Caco-2 (cell line): ENCODE measurements at regions of chr2 and their contacts with region 1.

Region 1: GRCh38 chr2:190136259-190136658 is 73.7 kb upstream of the MSTN start:
- DNase-seq: peak; percentile 61 to 77
- H3K4me3 ChIP-seq: no peak overlapping the region
- H3K4me3 Mint-ChIP-seq: no peak overlapping the region
- H3K27ac Mint-ChIP-seq: no peak overlapping the region
- H3K4me1 ChIP-seq: peaks cover 18% of the 10 kb centered on the region
- H3K4me1 Mint-ChIP-seq: peaks cover 7% of the 10 kb centered on the region
- H3K27me3 ChIP-seq: no peaks in the 10 kb centered on the region
- H3K27me3 Mint-ChIP-seq: no peaks in the 10 kb centered on the region
- CTCF ChIP-seq: no peak

Region 2: DNA sequence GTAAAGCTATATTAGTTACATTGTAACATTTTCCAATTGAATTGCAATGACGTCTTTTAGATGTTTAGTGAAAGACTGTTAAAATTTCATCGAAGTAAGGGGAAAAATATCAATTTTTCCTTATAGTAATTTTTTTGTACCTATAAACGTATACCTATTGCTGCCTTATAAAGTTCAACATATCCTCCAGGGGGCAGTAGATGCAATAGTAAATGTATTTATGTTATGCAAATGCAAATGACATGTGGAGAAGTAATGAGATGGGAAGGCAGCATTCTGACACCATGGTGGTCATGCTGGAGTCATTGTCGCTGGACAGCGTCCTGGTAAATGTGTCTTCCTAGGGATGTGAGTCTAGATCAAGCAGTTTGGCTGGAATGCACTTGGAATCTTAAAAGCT is 112.4 kb before region 1 on chr2:
- CTCF ChIA-PET with region 1: no interaction called
- POLR2A ChIA-PET with region 1: no interaction called
- intact Hi-C with region 1: no loop called
- DNase-seq: peak in 1 of 2 experiments; percentile 66
- H3K4me3 ChIP-seq: no peak overlapping the region
- H3K4me3 Mint-ChIP-seq: no peak overlapping the region
- H3K27ac Mint-ChIP-seq: no peak overlapping the region
- H3K4me1 ChIP-seq: no peaks in the 10 kb centered on the region
- H3K4me1 Mint-ChIP-seq: no peaks in the 10 kb centered on the region
- H3K27me3 ChIP-seq: no peaks in the 10 kb centered on the region; the same call in 1 of the 2 replicates
- H3K27me3 Mint-ChIP-seq: peaks cover 11% of the 10 kb centered on the region
- CTCF ChIP-seq: peak; percentile 51 to 54

Region 3: GRCh38 chr2:190170673-190171072 is 34.4 kb after region 1 on chr2:
- CTCF ChIA-PET with region 1: no interaction called
- POLR2A ChIA-PET with region 1: no interaction called
- intact Hi-C with region 1: loop called (anchors 1 kb)
- DNase-seq: no peak
- H3K4me3 ChIP-seq: no peak overlapping the region
- H3K4me3 Mint-ChIP-seq: no peak overlapping the region
- H3K27ac Mint-ChIP-seq: no peak overlapping the region
- H3K4me1 ChIP-seq: peaks cover 25% of the 10 kb centered on the region
- H3K4me1 Mint-ChIP-seq: peaks cover 21% of the 10 kb centered on the region
- H3K27me3 ChIP-seq: no peaks in the 10 kb centered on the region
- H3K27me3 Mint-ChIP-seq: no peaks in the 10 kb centered on the region
- CTCF ChIP-seq: no peak